Dendritic cell treated with granulocyte-macrophage colony-stimulating factor and Interleukin-4, amounts not matched to agents 40 ng/mL and 50 ng/mL, for 4 days (primary cell): ENCODE measurements at regions of chr10 and their contacts with region 1.

Region 1: DNA sequence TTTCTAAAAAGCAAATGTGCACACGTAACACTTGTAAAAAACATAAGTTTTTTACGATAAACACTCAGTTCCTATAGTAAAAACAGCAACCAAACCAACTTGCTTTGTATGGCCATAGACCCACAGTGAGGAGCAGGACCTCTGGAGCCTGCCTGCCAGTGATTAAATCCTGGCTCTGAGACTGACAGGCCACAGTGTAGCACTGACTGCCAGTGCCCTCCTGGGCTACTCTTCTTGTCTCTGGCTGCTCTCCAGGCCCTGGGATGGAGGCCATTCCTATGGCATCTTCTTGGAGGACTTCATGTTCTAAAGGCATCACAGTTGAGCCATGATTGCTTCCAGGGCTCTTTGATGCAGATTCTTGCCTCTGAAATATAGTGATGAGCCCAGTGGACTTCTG is 22.7 kb upstream of the TMEM254 start:
- H3K4me3 Mint-ChIP-seq: no peak overlapping the region
- H3K27ac Mint-ChIP-seq: no peak overlapping the region
- H3K4me1 Mint-ChIP-seq: peaks cover 6% of the 10 kb centered on the region
- H3K27me3 Mint-ChIP-seq: no peaks in the 10 kb centered on the region

Region 2: DNA sequence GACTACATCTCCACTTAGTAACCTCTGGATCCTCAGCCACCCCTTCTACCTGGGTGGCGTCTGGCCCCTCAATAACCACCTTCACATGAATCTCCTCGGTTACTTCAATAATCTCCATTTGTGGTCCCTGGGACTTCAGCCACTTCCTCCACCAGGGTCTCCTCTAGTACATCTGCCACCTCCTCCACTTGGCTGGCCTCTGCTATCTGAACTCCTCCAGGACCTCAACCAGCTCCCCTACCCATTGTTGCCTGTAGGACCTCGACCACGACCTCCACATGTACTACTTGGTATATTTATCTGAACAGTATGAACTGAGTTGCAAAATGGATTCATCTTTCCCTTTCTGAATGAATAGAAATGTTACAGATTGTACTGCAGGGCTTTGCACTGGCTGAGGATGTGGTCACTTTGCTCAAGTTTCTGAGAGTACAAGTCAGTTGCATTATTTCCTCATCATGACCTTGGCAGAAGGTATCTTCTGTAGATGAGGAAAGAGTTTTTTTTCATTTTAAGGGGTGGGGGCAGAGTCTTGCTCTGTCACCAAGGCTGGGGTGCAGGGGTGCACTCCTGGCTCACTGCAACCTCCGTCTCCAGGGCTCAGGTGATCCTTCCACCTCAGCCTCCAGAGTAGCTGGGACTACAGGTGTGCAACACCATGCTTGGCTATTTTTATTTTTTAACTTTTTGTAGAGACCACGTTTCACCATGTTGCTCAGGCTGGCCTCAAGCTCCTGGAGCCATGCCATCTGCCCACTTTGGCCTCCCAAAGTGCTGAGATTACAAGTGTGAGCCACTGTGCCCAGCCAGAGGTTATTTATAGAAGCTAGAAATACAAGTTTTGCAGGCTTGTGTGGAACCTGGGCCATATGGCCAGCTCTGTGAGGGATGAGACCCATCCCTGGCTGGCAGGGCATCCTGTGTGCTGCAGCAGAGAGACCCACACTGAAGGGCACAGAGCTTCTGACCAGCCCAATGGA is 197.8 kb after region 1 on chr10:
- intact Hi-C with region 1: loop called (anchors 10 kb)
- H3K4me3 Mint-ChIP-seq: no peak overlapping the region
- H3K27ac Mint-ChIP-seq: peak overlapping the region; percentile 6
- H3K4me1 Mint-ChIP-seq: peaks cover 29% of the 10 kb centered on the region
- H3K27me3 Mint-ChIP-seq: peaks cover 7% of the 10 kb centered on the region